Brain microvascular endothelial cell (primary cell): ENCODE measurements at regions of chr17 and their contacts with region 1.

Region 1: DNA sequence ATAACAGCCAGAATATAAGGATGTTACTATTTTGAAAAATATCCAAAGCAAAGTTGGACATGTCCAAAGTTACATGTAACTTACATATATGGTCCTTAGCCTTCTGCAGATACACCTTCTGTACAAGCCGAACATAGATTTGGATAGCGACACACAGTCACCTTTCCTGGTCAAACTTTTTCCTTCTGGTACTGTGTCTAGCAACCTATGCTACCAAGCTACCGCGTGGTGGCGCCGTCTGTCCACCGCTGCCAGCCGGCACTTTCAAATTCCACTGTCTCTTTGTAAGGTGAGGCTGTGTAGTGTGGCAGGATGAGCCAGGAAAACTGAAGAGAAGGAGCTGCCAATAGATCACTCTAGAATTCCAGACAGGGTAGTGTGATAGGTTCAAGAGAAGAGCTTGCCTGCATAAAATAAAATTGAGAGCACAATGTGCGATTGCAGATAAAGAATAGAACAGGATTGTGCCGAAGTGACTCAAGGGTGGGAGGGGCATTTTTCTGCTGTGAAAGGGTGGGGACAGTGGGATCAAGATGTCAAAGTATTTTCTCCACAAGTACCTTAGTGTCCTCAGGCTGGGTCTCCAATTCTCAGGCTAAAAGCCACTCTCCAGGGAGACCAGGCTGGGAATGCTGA is 366.9 kb downstream of the SLC39A11 start:
- DNase-seq: peak; percentile 38
- H3K4me3 ChIP-seq: no peak overlapping the region
- H3K27ac ChIP-seq: no peak overlapping the region
- H3K27me3 ChIP-seq: no peaks in the 10 kb centered on the region
- CTCF ChIP-seq: peak; percentile 97

Region 2: GRCh38 chr17:72602517-72603419 is 122.8 kb before region 1 on chr17:
- in situ Hi-C with region 1: no loop called
- DNase-seq: peak; percentile 93
- H3K4me3 ChIP-seq: peak overlapping the region; percentile 31
- H3K27ac ChIP-seq: peak overlapping the region; percentile 100
- H3K27me3 ChIP-seq: no peaks in the 10 kb centered on the region
- CTCF ChIP-seq: peak; percentile 72

Region 3: GRCh38 chr17:72901083-72901482 is 175.5 kb after region 1 on chr17:
- in situ Hi-C with region 1: no loop called
- DNase-seq: no peak
- H3K4me3 ChIP-seq: no peak overlapping the region
- H3K27ac ChIP-seq: no peak overlapping the region
- H3K27me3 ChIP-seq: no peaks in the 10 kb centered on the region
- CTCF ChIP-seq: no peak

Region 4: DNA sequence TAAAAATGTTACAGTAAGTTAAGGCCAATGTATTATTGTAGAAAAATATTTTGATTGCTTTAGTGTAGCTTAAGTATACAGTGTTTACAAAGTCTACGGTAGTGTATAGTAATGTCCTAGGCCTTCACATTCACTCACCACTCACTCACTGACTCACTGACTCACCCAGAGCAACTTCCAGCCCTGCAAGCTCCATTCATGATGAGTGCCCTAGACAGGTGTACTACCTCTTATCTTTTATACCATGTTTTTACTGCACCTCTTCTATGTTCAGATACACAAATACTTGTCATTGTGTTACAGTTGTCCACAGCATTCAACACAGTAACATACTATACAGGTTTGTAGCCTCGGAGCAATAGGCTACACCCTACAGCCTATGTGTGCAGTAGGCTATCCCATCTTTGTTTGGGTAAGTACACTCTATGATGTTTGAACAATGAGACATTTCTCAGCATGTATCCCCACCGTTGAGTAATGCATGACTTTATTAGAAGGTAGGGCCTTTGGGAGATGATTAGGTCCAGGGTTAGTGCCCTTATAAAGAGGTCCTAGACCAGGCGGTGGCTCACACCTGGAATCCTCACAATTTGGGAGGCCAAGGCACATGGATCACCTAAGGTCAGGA is 249.2 kb after region 1 on chr17:
- in situ Hi-C with region 1: loop called (anchors 25 kb)
- DNase-seq: peak; percentile 58
- H3K4me3 ChIP-seq: no peak overlapping the region
- H3K27ac ChIP-seq: no peak overlapping the region
- H3K27me3 ChIP-seq: no peaks in the 10 kb centered on the region
- CTCF ChIP-seq: no peak

Region 5: GRCh38 chr17:73991254-73991653 is 1265.7 kb after region 1 on chr17:
- in situ Hi-C with region 1: no loop called
- DNase-seq: no peak
- H3K4me3 ChIP-seq: no peak overlapping the region
- H3K27ac ChIP-seq: no peak overlapping the region
- H3K27me3 ChIP-seq: no peaks in the 10 kb centered on the region
- CTCF ChIP-seq: no peak